ENCODE measurements at regions of chr6 and their contacts with region 1.

Region 1: DNA sequence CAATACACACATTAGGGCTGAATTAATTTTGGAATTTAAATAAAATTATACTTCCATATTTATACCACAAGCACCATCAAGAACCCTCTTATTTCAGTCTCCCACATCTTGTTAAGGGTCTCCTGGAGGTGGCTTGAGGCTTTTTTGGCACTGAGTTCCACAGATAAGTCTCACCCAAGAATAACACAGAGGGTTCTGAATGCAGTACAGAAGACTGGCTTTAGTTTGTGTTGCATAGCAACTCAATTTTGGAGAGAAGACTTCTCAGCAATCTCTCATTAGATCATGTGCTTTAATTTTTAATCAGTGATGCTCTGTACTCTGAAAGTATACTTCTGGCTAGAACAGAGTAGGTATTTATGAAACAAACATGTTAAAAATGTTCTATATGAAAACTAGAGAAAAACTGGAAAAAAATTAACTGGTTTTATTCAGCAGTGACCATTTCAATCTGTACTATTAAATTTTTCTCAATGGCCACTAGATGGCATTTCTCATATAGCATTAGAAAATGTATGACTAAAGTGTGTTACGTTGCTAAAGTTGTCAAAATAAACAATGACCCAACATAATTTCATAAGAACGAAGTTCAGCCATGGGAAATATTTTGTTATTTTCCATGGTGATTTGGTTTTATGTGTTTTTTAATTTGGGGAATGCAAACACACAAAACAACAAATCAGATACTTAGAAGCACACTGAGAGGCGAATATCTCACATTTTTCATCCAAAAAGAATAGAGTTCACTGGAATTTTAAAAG is 32.7 kb upstream of the MAP7 start:
- DNase-seq: peak; percentile 77
- H3K4me3 ChIP-seq: no peak overlapping the region
- H3K27ac ChIP-seq: peak overlapping the region; percentile 89
- H3K4me1 ChIP-seq: peaks cover 4% of the 10 kb centered on the region
- H3K27me3 ChIP-seq: no peaks in the 10 kb centered on the region
- CTCF ChIP-seq: peak; percentile 26 to 31
- POLR2A ChIP-seq: no peak

Region 2: DNA sequence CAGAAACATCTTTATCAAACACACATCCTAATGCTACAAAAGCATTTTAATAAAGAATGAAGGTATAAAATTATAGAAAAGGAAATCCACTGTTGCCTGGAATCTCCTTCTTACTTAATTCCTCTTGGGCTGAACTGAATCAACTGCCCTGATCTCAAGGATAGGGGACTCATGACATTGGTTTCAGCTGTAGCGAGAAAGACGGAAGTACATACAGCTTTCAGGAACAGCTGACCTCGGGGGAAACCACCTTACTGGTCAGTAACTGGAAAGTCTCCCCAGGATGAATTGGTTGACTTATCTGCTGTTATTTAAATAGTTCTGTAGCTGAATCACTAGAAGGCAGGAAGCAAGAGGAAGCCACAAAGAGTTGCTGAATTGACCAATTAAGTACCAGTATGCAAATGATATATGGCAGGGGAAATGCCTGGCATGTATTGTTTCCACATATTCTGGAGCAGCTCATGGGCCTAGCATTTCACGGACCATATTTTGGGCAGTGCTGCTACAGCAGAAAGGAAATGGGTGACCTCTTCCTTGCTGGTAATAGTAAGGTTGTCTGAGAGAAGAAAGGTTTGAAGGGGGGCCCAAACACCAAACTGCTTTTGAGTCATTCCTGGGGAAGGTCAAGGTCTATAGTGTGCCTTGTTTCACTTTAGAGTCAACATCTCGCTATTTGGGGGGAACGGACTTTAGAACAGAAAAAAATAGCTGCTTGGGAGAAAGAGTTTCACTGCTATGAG is 11.0 kb after region 1 on chr6:
- CTCF ChIA-PET with region 1: interaction called, 5 read pairs
- POLR2A ChIA-PET with region 1: interaction called, 3 read pairs
- dilution Hi-C with region 1: no loop called
- intact Hi-C with region 1: loop called (anchors 1 kb)
- DNase-seq: peak; percentile 97
- H3K4me3 ChIP-seq: peak overlapping the region in 1 of 3 experiments; percentile 31
- H3K27ac ChIP-seq: peak overlapping the region; percentile 88
- H3K4me1 ChIP-seq: peaks cover 20% of the 10 kb centered on the region
- H3K27me3 ChIP-seq: no peaks in the 10 kb centered on the region
- CTCF ChIP-seq: no peak
- POLR2A ChIP-seq: no peak